GM10248 (cell line): ENCODE measurements at regions of chr22 and their contacts with region 1.

Region 1: DNA sequence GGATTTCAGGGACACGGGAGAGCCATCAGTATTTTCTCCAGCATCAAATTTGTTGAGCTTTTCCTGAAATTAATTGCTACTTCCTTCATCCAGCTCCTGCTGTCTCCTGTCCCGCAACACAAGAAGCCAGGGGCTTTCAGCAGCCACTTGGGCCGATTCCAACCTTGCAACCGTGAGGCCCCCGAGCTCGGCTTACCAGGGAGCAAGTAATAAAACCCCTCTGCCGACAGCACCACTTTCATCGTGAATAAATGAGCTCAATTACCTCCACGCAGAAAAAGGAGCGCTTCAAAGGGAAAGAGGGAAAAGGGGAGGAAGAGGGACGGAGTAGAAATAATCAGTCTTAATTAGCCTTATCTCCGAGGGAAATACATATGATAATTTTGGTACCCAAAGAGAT is 76.6 kb downstream of the CELSR1 start:
- DNase-seq: no peak
- CTCF ChIP-seq: no peak

Region 2: DNA sequence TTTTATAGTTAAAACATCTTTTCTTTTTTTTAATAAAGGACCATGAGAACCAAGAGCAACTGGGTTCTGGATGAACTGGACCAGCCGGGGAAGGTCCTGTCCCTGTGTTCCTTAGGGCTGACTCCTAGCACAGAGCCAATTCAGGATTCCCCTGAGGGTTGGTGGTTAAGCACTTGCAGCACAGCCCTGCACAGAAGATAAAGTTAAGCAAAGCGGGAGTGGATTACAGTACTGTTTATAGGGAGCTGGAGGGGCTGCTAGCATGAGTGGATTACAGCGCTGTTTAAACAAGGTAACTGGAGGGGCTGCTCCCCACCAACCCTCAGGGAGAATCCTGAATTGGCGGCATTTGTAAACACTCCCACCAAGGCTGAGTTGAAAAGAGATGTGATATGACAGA is 14.1 kb before region 1 on chr22:
- CTCF ChIA-PET with region 1: interaction called, 14 read pairs
- POLR2A ChIA-PET with region 1: no interaction called
- DNase-seq: no peak
- CTCF ChIP-seq: no peak

Region 3: GRCh38 chr22:46476547-46476941 is 15.7 kb after region 1 on chr22:
- CTCF ChIA-PET with region 1: no interaction called
- POLR2A ChIA-PET with region 1: no interaction called
- DNase-seq: peak; percentile 67
- CTCF ChIP-seq: no peak

Region 4: GRCh38 chr22:46762238-46763050 is 301.6 kb after region 1 on chr22 and contains the start of gene TBC1D22A:
- CTCF ChIA-PET with region 1: no interaction called
- POLR2A ChIA-PET with region 1: no interaction called
- DNase-seq: peak; percentile 95
- CTCF ChIP-seq: no peak